Heart left ventricle (tissue), 16 donors: ENCODE measurements at regions of chr12 and their contacts with region 1.

Region 1: GRCh38 chr12:30847259-30847658 is 79.3 kb upstream of the TSPAN11 start:
- DNase-seq: no peak
- ATAC-seq: no peak
- H3K4me3 ChIP-seq: no peak overlapping the region
- H3K27ac ChIP-seq: no peak overlapping the region
- H3K4me1 ChIP-seq: peaks cover 0 to 8% (median 0%) of the 10 kb centered on the region in 12 donors
- H3K27me3 ChIP-seq: peaks cover 0 to 5% (median 0%) of the 10 kb centered on the region in 9 donors
- CTCF ChIP-seq: peak; percentile 60 to 81 (median 70)
- POLR2A ChIP-seq: no peak

Region 2: DNA sequence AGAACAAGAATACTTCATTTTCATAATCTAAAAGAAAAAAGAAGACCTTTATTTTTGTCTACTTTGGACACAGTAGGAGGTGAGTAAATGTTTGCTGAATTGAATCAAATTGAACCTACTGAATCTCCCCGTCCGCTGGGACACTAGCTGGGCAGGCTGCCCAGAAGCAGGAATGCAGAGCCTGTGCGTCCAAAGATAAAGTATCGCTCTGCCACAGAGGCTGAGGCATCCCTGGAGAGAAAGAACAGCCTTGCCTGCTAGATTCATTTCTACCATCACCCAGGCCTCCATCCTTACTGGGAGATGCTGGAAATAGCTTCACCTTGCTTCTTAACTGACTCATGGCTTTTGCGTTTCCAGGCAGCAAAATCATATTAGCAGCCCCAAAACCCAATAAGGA is 15.2 kb after region 1 on chr12:
- intact Hi-C with region 1: no loop called
- DNase-seq: peak; percentile 38 to 76 (median 58)
- ATAC-seq: peak; percentile 67 to 87 (median 84)
- H3K4me3 ChIP-seq: no peak overlapping the region
- H3K27ac ChIP-seq: no peak overlapping the region
- H3K4me1 ChIP-seq: peaks cover 0 to 7% (median 0%) of the 10 kb centered on the region in 12 donors
- H3K27me3 ChIP-seq: no peaks in the 10 kb centered on the region
- CTCF ChIP-seq: no peak
- POLR2A ChIP-seq: no peak

Region 3: DNA sequence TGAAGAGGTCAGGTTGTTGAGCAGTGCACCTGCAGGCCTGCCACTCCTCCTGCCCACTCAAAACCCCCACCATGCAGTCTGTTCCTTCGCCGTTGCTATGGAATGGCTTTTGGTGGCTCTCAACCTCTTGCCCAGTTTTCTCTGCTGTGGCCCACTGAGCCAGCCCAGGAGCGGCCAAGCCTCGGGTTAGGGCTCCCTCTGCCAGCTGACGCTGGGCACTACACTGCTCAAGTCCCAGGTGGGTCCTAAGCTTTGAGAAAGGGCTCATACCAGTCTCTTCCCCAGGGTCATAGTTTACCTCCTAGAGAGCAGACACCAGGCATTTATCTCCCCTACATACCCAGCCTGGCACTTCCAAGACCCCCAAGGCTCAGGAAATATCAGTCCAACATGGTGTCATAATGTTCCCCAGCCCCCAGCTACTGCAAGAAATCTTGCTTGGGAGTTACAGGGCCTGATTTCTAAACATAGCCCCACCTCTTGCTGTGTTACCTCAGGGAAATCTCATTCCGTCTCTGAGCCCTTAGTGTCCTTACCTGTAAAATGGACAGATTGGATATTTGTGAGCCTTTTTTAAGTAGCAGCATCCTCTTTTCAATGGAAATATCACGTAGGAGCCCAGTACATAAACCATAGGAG is 138.7 kb after region 1 on chr12:
- intact Hi-C with region 1: loop called in 9 of 10 experiments (anchors 1 to 5 kb)
- DNase-seq: peak in 3 of 5 donors; percentile 39 to 70 (median 42)
- ATAC-seq: peak; percentile 44 to 80 (median 68)
- H3K4me3 ChIP-seq: no peak overlapping the region
- H3K27ac ChIP-seq: no peak overlapping the region
- H3K4me1 ChIP-seq: peaks cover 0 to 11% (median 1%) of the 10 kb centered on the region in 12 donors
- H3K27me3 ChIP-seq: no peaks in the 10 kb centered on the region
- CTCF ChIP-seq: peak; percentile 42 to 75 (median 62)
- POLR2A ChIP-seq: no peak

Region 4: GRCh38 chr12:31057671-31058070 is 210.4 kb after region 1 on chr12:
- intact Hi-C with region 1: loop called in 1 of 10 experiments (anchors 10 kb)
- DNase-seq: no peak
- ATAC-seq: no peak
- H3K4me3 ChIP-seq: no peak overlapping the region
- H3K27ac ChIP-seq: no peak overlapping the region
- H3K4me1 ChIP-seq: no peaks in the 10 kb centered on the region
- H3K27me3 ChIP-seq: no peaks in the 10 kb centered on the region
- CTCF ChIP-seq: no peak
- POLR2A ChIP-seq: no peak

Region 5: DNA sequence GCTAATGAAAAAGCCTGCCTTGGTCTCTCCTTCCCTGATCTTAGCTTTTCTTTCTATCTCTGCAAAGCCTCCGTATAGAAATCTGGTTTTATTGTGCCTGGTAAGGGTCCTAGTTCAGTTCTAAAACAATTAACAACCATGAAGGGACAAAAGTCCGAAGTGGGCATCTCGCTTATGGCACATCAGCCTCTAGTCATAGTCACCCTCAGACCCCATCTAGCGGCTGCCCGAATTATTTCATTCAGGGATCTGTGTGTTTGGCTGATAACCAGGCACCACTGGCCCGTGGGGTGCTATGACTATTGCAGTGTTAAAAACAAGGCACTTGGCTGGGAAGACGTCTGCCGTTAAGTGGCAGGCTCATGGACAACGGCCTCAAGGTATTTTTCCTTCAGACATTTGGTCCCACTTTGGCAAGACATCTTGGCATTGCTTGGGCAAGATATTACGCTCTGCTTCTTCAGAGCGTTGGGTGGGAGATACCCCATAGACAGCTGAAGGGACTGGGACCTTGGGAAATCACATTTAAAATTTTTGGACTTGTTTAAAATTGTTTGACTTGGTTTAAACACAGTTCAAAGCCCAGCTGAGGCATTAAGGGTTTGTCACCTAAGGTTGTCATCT is 391.6 kb after region 1 on chr12:
- intact Hi-C with region 1: loop called in 6 of 10 experiments (anchors 2 to 10 kb)
- DNase-seq: peak in 4 of 5 donors; percentile 44 to 65 (median 56)
- ATAC-seq: peak in 3 of 4 donors; percentile 69 to 83 (median 72)
- H3K4me3 ChIP-seq: no peak overlapping the region
- H3K27ac ChIP-seq: no peak overlapping the region
- H3K4me1 ChIP-seq: peaks cover 0 to 4% (median 0%) of the 10 kb centered on the region in 12 donors
- H3K27me3 ChIP-seq: peaks cover 0 to 34% (median 11%) of the 10 kb centered on the region in 9 donors
- CTCF ChIP-seq: peak; percentile 51 to 79 (median 62)
- POLR2A ChIP-seq: no peak

Region 6: DNA sequence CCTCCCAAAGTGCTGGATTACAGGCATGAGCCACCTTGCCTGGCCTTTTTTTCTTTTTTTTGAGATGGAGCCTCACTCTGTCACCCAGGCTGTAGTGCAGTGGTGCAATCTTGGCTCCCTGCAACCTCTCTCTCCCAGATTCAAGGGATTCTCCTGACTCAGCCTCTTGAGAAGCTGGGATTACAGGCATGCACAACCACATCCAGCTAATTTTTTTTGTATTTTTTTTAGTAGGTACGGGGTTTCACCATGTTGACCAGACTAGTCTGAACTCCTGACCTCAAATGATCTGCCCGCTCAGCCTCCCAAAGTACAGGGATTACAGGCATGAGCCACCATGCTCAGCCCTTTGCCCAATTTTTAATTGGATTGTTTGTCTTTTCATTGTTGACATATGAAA is 420.7 kb after region 1 on chr12:
- intact Hi-C with region 1: loop called in 9 of 10 experiments (anchors 2 to 10 kb)
- DNase-seq: no peak
- ATAC-seq: no peak
- H3K4me3 ChIP-seq: no peak overlapping the region
- H3K27ac ChIP-seq: no peak overlapping the region
- H3K4me1 ChIP-seq: no peaks in the 10 kb centered on the region
- H3K27me3 ChIP-seq: no peaks in the 10 kb centered on the region
- CTCF ChIP-seq: no peak
- POLR2A ChIP-seq: no peak

Region 7: GRCh38 chr12:31274520-31275300 is 427.5 kb after region 1 on chr12:
- intact Hi-C with region 1: loop called in 9 of 10 experiments (anchors 2 to 10 kb)
- DNase-seq: no peak
- ATAC-seq: no peak
- H3K4me3 ChIP-seq: no peak overlapping the region
- H3K27ac ChIP-seq: no peak overlapping the region
- H3K4me1 ChIP-seq: no peaks in the 10 kb centered on the region
- H3K27me3 ChIP-seq: no peaks in the 10 kb centered on the region
- CTCF ChIP-seq: no peak
- POLR2A ChIP-seq: no peak